ENCODE measurements at regions of chr3 and their contacts with region 1.

Region 1: DNA sequence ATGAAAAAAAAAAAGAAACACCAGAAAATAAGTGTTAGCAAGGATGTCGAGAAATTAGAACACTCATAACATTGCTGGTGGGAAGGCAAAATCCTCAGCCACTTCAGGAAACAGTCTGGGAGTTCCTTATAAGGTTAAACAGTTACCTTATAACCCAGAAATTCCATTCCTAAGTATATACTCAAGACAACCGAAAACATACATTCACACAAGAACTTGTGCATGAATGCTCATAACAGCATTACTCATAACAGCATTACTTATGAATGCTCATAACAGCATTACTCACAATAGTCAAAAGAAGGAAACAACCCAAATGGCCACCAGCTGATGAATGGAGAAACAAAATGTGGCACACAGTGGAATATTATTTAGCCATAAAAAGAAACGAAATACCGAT is 34.8 kb upstream of the DCP1A start:
- DNase-seq: no peak
- H3K4me3 ChIP-seq: no peak overlapping the region
- H3K27ac ChIP-seq: no peak overlapping the region
- H3K4me1 ChIP-seq: no peaks in the 10 kb centered on the region
- H3K27me3 ChIP-seq: no peaks in the 10 kb centered on the region
- CTCF ChIP-seq: no peak
- POLR2A ChIP-seq: no peak

Region 2: DNA sequence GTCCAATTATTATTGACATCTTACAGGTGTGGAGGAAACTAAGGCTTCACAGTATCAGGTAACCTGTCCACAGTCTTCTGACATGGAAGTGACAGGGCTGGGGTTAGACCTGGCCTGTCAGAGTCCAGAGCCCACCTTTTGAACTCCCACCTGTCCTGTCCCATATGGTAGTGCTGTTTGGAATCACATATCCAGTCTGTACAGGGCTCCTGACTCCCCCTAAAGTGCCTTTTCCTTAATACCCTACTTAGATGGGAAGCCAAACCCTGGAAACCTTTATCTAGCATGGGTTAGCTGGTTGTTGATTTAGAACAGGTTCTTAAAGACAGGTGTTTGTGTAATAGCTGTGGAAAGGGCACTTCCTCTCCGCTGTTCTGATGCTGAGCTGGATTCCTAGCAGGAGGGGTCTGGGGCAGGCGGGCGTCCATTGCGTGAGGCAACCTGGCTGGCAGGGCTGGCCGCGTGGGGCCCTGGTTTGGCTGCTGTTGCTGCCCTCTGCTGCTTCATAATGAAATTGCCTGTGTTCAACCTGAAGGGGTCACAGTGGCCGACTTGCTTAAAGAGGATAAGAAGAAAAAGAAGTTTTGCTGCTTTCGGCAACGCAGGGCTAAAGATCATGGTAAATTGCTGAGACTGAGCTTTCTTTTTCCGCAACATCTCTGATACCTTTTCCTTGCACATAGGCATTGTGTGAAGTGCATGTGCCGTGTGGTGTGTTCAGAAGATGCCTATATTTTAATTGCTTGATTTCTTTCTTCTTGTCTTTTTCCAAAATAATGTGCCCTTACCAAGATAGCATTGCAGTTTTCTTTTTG is 328.0 kb after region 1 on chr3:
- intact Hi-C with region 1: loop called (anchors 10 kb)
- DNase-seq: peak; percentile 82
- H3K4me3 ChIP-seq: no peak overlapping the region
- H3K27ac ChIP-seq: no peak overlapping the region
- H3K4me1 ChIP-seq: peaks cover 24% of the 10 kb centered on the region
- H3K27me3 ChIP-seq: no peaks in the 10 kb centered on the region
- CTCF ChIP-seq: peak; percentile 46 to 76 (median 76)
- POLR2A ChIP-seq: no peak

Measured in testis (tissue), 5 donors.